ENCODE measurements at regions of chr6 and their contacts with region 1.

Region 1: DNA sequence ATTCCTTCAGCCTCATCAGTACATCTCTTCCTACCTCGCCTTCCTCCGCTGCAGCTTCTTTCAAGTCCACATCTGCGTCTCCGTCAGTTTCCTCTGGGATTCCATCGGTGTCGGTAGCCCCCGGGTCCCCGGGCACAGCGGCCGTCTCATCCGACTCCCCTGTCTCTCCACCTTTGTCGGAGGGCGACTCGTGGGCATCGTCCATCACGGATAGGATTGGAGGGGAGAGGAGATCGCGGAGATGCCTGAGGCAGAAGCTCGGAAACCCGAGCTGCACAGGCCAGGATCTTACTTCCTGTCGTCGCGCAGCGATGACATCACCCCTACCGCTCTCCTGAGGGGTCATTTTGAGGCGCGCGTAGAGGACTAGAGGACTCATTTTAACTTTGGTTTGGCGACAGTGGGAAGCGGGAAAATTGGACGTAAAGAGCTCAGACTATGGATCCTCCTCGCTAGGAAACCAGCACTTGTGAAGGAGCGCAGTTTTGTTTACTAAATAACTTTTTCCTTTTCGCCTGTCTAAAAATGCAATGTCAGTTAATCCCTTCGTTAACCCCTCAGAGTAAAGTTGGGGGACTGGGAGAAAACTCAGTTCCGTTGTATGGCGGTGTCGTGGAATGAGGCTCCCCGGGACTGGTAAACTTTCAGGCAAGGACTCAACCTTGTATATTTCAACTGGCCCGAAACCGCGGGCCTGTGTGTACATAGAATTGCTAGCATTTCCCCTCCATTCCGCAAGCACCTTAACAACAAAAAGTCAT is at the start of gene TAF11:
- DNase-seq: peak; percentile 93 to 98 (median 96)
- H3K4me3 ChIP-seq: peak within 1 kb of the TSS; percentile 90 to 96 (median 93)
- H3K27ac ChIP-seq: peak within 1 kb of the TSS; percentile 76 to 95 (median 84)
- H3K4me1 ChIP-seq: peaks cover 18 to 32% of the 10 kb centered on the region in 2 donors
- H3K27me3 ChIP-seq: no peaks in the 10 kb centered on the region
- CTCF ChIP-seq: no peak
- POLR2A ChIP-seq: peak; percentile 73 to 92
- total RNA-seq, gene TAF11: 16.4 to 52.1 (median 24.0) TPM

Region 2: GRCh38 chr6:34934516-34934915 is 46.6 kb after region 1 on chr6:
- intact Hi-C with region 1: loop called in 1 of 2 experiments (anchors 10 kb)
- DNase-seq: peak; percentile 65 to 95 (median 85)
- H3K4me3 ChIP-seq: no peak overlapping the region
- H3K27ac ChIP-seq: peak overlapping the region in 2 of 5 donors; percentile 40
- H3K4me1 ChIP-seq: peaks cover 26 to 60% of the 10 kb centered on the region in 2 donors
- H3K27me3 ChIP-seq: no peaks in the 10 kb centered on the region
- CTCF ChIP-seq: no peak
- POLR2A ChIP-seq: no peak

Region 3: DNA sequence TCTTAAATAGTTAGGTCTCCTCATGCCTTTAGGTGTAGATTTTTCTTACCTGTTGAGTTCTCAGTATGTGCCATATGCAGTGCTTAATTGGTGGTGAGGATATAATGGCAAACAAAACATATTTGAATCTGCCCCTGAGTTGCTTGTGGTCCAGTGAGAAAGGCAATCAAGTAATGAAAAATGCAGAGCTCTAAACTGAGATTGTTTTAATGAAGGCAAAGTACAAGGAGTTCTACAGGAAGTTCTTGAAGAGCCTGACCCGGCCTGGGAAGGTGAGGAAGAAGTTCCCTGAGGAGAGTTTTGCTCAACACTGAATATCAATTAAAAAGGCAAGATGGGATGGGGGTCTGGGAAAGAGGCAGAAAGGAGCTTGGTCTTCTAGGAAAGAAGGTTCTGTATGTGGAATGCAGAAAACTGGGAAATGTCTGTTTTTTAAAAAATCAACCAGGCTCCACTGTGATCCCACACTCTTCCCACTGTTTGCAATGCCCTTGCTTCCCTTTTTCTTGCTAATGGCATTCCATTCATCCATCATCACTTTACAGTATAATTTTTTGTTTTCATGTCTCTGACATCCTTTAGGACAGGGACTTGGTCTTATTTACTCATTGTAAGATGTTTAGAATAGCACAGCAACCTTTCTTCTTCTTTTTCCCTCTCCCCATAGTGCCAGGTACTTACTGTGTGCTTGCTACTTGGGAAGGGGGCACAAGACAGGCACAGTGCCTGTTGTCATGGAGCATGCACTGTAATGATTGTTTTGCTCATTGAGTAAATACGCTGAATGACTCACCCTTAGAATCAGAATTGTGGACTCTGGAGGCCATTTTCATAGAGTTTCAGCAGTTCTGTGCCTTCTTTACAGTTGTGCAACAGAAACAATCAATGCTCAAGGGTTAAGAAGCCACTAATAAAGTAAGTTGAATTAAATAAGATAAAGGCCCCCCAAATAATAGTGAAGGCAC is 65.4 kb after region 1 on chr6:
- intact Hi-C with region 1: loop called in 1 of 2 experiments (anchors 10 kb)
- DNase-seq: no peak
- H3K4me3 ChIP-seq: no peak overlapping the region
- H3K27ac ChIP-seq: peak overlapping the region in 2 of 5 donors; percentile 30 to 40
- H3K4me1 ChIP-seq: peaks cover 32 to 61% of the 10 kb centered on the region in 2 donors
- H3K27me3 ChIP-seq: no peaks in the 10 kb centered on the region
- CTCF ChIP-seq: no peak
- POLR2A ChIP-seq: no peak